B cell (primary cell): ENCODE measurements at regions of chr16 and their contacts with region 1.

Region 1: DNA sequence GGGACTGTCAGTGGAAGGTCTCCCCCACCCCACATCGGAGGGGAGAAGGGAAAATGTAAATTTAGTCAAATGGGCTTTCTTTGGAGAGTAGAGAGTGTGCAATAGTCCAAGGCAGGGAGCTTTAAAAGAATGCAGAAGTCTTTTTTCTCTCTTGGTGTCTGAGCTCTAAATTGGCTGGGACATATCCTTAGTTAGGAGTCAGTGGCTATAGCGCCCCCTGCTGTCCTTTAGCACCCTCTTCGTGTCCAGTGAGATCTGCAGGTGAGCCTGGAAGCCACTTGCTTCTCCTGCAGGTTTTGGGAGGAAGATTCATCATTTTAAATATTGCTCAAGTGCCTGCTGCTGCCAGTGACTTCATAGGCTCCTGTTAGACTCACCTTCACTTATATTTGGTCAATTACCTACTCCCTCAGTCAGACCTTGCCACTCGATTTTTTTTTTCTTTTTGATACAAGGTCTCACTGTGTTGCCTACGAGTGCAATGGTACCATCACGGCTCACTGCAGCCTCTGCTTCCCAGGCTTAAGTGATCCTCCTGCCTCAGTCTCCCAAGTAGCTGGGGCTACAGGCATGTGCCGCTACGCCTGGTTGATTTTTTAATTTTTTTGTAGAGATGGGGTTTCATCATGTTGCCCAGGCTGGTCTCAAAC is 174.8 kb downstream of the PRKCB start:
- DNase-seq: peak; percentile 91
- ATAC-seq: peak; percentile 26
- H3K4me3 ChIP-seq: peak overlapping the region in 1 of 5 experiments; percentile 30
- H3K4me3 Mint-ChIP-seq: peak overlapping the region; percentile 80
- H3K27ac ChIP-seq: peak overlapping the region; percentile 5 to 17
- H3K27ac Mint-ChIP-seq: peak overlapping the region; percentile 90
- H3K4me1 ChIP-seq: peaks cover 95 to 100% of the 10 kb centered on the region in 2 donors
- H3K4me1 Mint-ChIP-seq: peaks cover 97% of the 10 kb centered on the region
- H3K27me3 ChIP-seq: no peaks in the 10 kb centered on the region
- H3K27me3 Mint-ChIP-seq: no peaks in the 10 kb centered on the region
- CTCF ChIP-seq: peak; percentile 91

Region 2: GRCh38 chr16:23835390-23836077 is 175.0 kb before region 1 on chr16 and contains the start of gene PRKCB:
- CTCF ChIA-PET with region 1: interaction called, 9 read pairs
- POLR2A ChIA-PET with region 1: interaction called, 5 read pairs
- intact Hi-C with region 1: loop called (anchors 1 kb)
- DNase-seq: peak; percentile 93
- ATAC-seq: peak; percentile 83
- H3K4me3 ChIP-seq: peak within 1 kb of the TSS; percentile 78 to 98 (median 88)
- H3K4me3 Mint-ChIP-seq: peak within 1 kb of the TSS; percentile 99
- H3K27ac ChIP-seq: peak within 1 kb of the TSS; percentile 7 to 56
- H3K27ac Mint-ChIP-seq: peak within 1 kb of the TSS; percentile 96
- H3K4me1 ChIP-seq: peaks cover 34 to 37% of the 10 kb centered on the region in 2 donors
- H3K4me1 Mint-ChIP-seq: peaks cover 48% of the 10 kb centered on the region
- H3K27me3 ChIP-seq: no peaks in the 10 kb centered on the region
- H3K27me3 Mint-ChIP-seq: no peaks in the 10 kb centered on the region
- CTCF ChIP-seq: no peak
- total RNA-seq, gene PRKCB: 373 and 397 TPM in 2 replicates

Region 3: GRCh38 chr16:23863511-23864422 is 146.8 kb before region 1 on chr16:
- CTCF ChIA-PET with region 1: interaction called, 69 read pairs
- POLR2A ChIA-PET with region 1: interaction called, 7 read pairs
- intact Hi-C with region 1: loop called (anchors 1 kb)
- DNase-seq: peak; percentile 82
- ATAC-seq: peak; percentile 80
- H3K4me3 ChIP-seq: peak overlapping the region; percentile 28 to 68 (median 55)
- H3K4me3 Mint-ChIP-seq: peak overlapping the region; percentile 89
- H3K27ac ChIP-seq: peak overlapping the region; percentile 54 to 76
- H3K27ac Mint-ChIP-seq: peak overlapping the region; percentile 92
- H3K4me1 ChIP-seq: peaks cover 92 to 94% of the 10 kb centered on the region in 2 donors
- H3K4me1 Mint-ChIP-seq: peaks cover 93% of the 10 kb centered on the region
- H3K27me3 ChIP-seq: no peaks in the 10 kb centered on the region
- H3K27me3 Mint-ChIP-seq: no peaks in the 10 kb centered on the region
- CTCF ChIP-seq: no peak

Region 4: DNA sequence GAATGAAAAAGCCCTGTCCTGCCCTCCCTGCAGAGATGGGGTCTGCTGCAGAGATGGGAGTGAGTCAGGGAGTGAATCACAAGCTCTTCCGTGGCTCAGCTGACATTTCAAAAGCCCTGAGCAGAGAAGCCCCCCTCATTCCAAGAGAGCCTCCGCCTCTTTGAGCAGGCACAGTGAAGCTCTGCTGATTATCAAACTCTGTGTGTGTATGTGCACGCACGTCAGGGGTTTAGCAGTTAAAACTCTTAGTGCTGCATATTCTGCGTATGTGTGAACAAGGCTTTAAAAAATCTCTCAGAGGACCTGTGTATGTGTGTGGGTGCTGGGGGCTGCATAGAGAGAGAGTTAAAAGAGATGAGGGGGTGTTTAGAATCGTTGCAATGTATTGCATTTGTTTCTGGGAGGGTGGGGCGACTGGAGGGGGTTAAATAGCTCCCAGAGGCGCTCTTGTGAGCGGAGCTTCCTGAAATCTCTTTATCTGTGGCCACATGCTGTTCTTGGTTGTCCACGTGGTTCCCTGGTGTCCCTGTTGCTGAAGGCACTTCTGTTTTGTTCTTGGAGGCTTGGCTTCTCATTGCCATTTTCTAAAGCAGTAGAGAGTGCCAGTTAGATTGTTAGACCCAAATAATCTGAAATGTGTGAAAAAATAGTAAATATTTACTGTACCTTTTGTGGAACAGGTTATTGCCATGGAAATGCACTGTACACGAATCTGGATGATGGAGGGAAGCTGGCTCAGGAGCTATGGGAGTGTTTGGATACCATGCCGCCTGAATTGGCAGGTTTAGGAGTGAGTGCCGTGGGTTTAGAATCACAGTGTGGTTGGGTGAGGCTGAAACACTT is 58.2 kb before region 1 on chr16:
- CTCF ChIA-PET with region 1: interaction called, 45 read pairs
- POLR2A ChIA-PET with region 1: interaction called, 12 read pairs
- intact Hi-C with region 1: loop called (anchors 2 kb)
- DNase-seq: peak; percentile 38
- ATAC-seq: peak; percentile 29
- H3K4me3 ChIP-seq: peak overlapping the region in 1 of 5 experiments; percentile 15
- H3K4me3 Mint-ChIP-seq: peak overlapping the region; percentile 75
- H3K27ac ChIP-seq: peak overlapping the region; percentile 28 to 88
- H3K27ac Mint-ChIP-seq: peak overlapping the region; percentile 92
- H3K4me1 ChIP-seq: peaks cover 95 to 96% of the 10 kb centered on the region in 2 donors
- H3K4me1 Mint-ChIP-seq: peaks cover 93% of the 10 kb centered on the region
- H3K27me3 ChIP-seq: no peaks in the 10 kb centered on the region
- H3K27me3 Mint-ChIP-seq: no peaks in the 10 kb centered on the region
- CTCF ChIP-seq: no peak

Region 5: DNA sequence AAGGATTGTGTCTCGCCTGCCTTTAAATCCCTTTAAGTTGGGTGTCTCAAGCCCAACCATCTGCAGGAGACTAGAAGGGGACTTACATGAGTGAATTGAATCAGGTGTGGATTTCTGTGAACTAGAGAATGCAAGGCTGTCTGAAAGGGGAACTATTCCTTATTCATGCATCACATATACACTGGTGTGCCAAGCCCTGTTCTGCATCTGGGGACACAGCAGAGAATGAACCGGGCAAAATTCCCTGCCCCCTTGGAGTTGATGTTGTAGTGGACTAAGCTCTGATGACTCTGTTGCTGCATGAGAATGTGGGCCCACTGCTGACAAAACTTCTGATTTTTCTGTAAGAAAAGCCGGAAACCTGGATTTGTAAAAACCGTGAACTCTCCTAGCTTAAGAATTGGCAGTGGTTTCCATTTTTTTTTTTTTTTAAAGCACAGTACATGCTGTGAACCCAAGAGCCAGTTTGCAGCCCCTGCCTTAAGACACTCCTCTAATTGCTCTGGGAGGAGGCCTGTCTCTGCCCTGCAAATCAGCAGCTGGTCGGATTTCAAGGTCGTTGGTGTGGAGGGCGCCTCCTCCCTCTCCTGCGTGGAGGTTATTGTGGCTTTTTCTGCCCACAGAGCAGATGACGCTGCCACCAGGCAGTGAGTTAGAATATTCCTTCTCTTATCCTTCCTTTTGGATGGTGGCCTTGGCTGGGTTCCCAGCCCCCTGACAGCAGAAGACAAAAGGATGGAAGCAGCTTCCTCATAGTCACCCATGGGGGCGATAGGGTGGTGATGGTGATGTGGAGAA is 43.8 kb before region 1 on chr16:
- CTCF ChIA-PET with region 1: interaction called, 15 read pairs
- POLR2A ChIA-PET with region 1: interaction called, 4 read pairs
- intact Hi-C with region 1: no loop called
- DNase-seq: peak; percentile 50
- ATAC-seq: peak; percentile 76
- H3K4me3 ChIP-seq: peak overlapping the region in 1 of 5 experiments; percentile 1
- H3K4me3 Mint-ChIP-seq: peak overlapping the region; percentile 75
- H3K27ac ChIP-seq: peak overlapping the region; percentile 14 to 66
- H3K27ac Mint-ChIP-seq: peak overlapping the region; percentile 85
- H3K4me1 ChIP-seq: peaks cover 55% of the 10 kb centered on the region in 2 donors
- H3K4me1 Mint-ChIP-seq: peaks cover 88% of the 10 kb centered on the region
- H3K27me3 ChIP-seq: no peaks in the 10 kb centered on the region
- H3K27me3 Mint-ChIP-seq: no peaks in the 10 kb centered on the region
- CTCF ChIP-seq: no peak

Region 6: DNA sequence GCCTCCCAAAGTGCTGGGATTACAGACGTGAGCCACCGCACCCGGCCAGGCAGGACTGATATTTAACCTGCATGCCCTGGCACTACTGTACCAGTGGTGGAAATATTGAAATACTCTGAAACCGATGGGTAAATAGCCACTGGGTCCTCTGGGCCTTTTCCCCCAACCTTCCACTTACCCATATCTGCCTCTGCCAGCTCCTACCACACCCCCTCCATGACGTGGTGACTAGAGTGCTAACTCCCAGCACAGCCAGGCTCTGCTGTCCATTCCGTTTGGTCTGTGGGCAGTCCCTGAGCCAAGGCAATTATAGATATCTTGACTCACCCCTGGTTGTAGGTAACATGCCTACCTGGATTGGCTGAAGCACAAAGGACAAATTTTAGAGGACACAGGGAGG is 13.1 kb after region 1 on chr16:
- CTCF ChIA-PET with region 1: interaction called, 20 read pairs
- POLR2A ChIA-PET with region 1: interaction called, 6 read pairs
- intact Hi-C with region 1: no loop called
- DNase-seq: no peak
- ATAC-seq: no peak
- H3K4me3 ChIP-seq: no peak overlapping the region
- H3K4me3 Mint-ChIP-seq: no peak overlapping the region
- H3K27ac ChIP-seq: no peak overlapping the region
- H3K27ac Mint-ChIP-seq: peak overlapping the region; percentile 8
- H3K4me1 ChIP-seq: peaks cover 55 to 72% of the 10 kb centered on the region in 2 donors
- H3K4me1 Mint-ChIP-seq: peaks cover 76% of the 10 kb centered on the region
- H3K27me3 ChIP-seq: no peaks in the 10 kb centered on the region
- H3K27me3 Mint-ChIP-seq: no peaks in the 10 kb centered on the region
- CTCF ChIP-seq: no peak